HepG2 (cell line): ENCODE measurements at regions of chr3 and their contacts with region 1.

Region 1: DNA sequence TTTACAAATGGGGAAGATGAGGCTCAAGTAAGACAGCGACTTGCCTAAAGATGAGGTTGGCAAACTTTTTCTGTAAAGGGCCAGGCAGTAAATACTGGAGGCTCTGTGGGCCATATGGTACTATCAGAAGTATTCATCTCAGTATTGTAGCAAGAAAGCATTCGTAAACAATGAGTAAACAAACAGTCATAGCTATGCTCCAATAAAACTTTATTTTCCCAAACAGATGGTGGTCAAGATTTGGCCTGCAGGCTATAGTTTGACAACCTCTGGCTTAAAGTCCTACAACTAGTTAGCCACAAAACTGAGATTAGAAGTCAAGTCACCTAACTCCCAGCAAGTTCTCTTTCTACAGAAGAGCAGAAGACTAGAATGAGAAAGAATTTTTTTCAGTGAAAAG is 177.0 kb upstream of the NECTIN3 start:
- DNase-seq: no peak
- ATAC-seq: no peak
- H3K4me3 ChIP-seq: no peak overlapping the region
- H3K27ac ChIP-seq: no peak overlapping the region
- H3K4me1 ChIP-seq: peaks cover 12% of the 10 kb centered on the region
- H3K27me3 ChIP-seq: no peaks in the 10 kb centered on the region
- CTCF ChIP-seq: no peak
- EP300 ChIP-seq: no peak
- POLR2A ChIP-seq: no peak
- RAD21 ChIP-seq: no peak

Region 2: GRCh38 chr3:110711851-110712516 is 182.6 kb before region 1 on chr3:
- CTCF ChIA-PET with region 1: no interaction called
- POLR2A ChIA-PET with region 1: no interaction called
- in situ Hi-C with region 1: no loop called
- intact Hi-C with region 1: loop called (anchors 5 kb)
- DNase-seq: no peak
- ATAC-seq: no peak
- H3K4me3 ChIP-seq: no peak overlapping the region
- H3K27ac ChIP-seq: no peak overlapping the region
- H3K4me1 ChIP-seq: peaks cover 18% of the 10 kb centered on the region
- H3K27me3 ChIP-seq: no peaks in the 10 kb centered on the region
- CTCF ChIP-seq: no peak
- EP300 ChIP-seq: no peak
- POLR2A ChIP-seq: no peak
- RAD21 ChIP-seq: no peak

Region 3: DNA sequence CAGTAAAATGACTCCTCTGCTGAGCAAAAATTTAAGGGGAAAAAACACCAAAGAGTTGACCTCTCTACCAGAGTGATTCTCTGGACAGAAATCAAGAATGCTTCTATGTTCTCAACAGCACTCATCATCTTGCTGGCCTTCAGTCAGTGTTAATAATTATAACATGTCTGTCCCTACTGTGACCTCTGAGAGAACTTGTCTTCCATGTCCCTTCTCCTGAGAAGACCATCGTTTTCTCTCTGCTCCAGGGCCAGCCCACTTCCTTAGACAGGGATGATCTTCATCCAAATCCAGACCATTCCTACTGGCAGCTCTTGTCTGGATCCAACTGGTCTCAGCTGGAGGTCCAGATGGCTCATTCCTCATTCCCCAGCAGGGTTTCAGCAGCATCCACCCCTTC is 38.0 kb after region 1 on chr3:
- CTCF ChIA-PET with region 1: no interaction called
- POLR2A ChIA-PET with region 1: no interaction called
- in situ Hi-C with region 1: no loop called
- intact Hi-C with region 1: loop called (anchors 1 kb)
- DNase-seq: no peak
- ATAC-seq: no peak
- H3K4me3 ChIP-seq: no peak overlapping the region
- H3K27ac ChIP-seq: no peak overlapping the region
- H3K4me1 ChIP-seq: peaks cover 23% of the 10 kb centered on the region
- H3K27me3 ChIP-seq: no peaks in the 10 kb centered on the region
- CTCF ChIP-seq: no peak
- EP300 ChIP-seq: no peak
- POLR2A ChIP-seq: no peak
- RAD21 ChIP-seq: no peak